GM12878 (cell line): ENCODE measurements at regions of chr1 and their contacts with region 1.

Region 1: GRCh38 chr1:104648269-104648691 is 898.6 kb downstream of the AMY1C start:
- DNase-seq: no peak
- ATAC-seq: peak; percentile 73
- H3K4me3 ChIP-seq: no peak overlapping the region
- H3K27ac ChIP-seq: no peak overlapping the region
- H3K4me1 ChIP-seq: no peaks in the 10 kb centered on the region
- H3K27me3 ChIP-seq: no peaks in the 10 kb centered on the region
- CTCF ChIP-seq: peak; percentile 37 to 58 (median 53); a peak in 5 of 6 replicates
- EP300 ChIP-seq: no peak
- POLR2A ChIP-seq: no peak
- RAD21 ChIP-seq: peak; percentile 88

Region 2: GRCh38 chr1:104765085-104765484 is 116.8 kb after region 1 on chr1:
- CTCF ChIA-PET with region 1: interaction called, 3 read pairs
- POLR2A ChIA-PET with region 1: no interaction called
- RAD21 ChIA-PET with region 1: interaction called, 6 read pairs
- SMC1A ChIA-PET with region 1: interaction called, 5 read pairs
- in situ Hi-C with region 1: no loop called
- intact Hi-C with region 1: loop called (anchors 5 kb)
- DNase-seq: peak; percentile 59
- ATAC-seq: peak; percentile 92
- H3K4me3 ChIP-seq: no peak overlapping the region
- H3K27ac ChIP-seq: no peak overlapping the region
- H3K4me1 ChIP-seq: peaks cover 4% of the 10 kb centered on the region
- H3K27me3 ChIP-seq: no peaks in the 10 kb centered on the region
- CTCF ChIP-seq: no peak
- EP300 ChIP-seq: no peak; a peak in 1 of 4 replicates
- POLR2A ChIP-seq: no peak
- RAD21 ChIP-seq: no peak

Region 3: DNA sequence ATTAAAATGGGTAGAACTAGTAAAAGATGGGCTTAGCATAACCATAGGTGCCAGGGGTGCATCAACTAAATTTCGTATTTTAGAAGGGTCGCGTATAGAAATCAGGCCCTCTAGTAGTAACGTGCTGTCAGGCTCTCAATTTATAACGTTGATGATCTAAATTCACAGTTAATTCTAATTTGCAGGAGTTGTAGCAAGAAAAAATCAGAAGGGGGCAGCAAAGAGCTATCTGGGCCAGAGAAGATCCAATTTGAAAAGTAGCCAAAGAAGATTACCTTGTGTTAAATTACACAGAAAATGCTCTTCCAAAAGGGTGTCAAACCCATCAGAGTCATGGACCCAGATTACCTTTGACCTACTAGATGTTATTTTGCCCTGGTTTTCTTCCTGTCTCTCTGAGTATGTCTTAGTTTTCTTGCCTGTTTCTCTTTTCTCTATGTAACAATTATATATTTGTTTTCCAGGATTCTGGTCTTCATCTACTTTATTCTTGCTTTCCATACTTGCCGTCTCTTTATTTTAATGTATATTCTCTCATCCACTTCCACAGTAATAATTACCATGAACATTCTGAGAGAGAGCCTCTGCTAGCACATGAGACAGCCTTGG is 132.3 kb after region 1 on chr1:
- CTCF ChIA-PET with region 1: interaction called, 28 read pairs
- POLR2A ChIA-PET with region 1: no interaction called
- RAD21 ChIA-PET with region 1: interaction called, 15 read pairs
- SMC1A ChIA-PET with region 1: interaction called, 9 read pairs
- in situ Hi-C with region 1: no loop called
- intact Hi-C with region 1: loop called (anchors 2 kb)
- DNase-seq: no peak
- ATAC-seq: peak; percentile 63
- H3K4me3 ChIP-seq: no peak overlapping the region
- H3K27ac ChIP-seq: no peak overlapping the region
- H3K4me1 ChIP-seq: no peaks in the 10 kb centered on the region
- H3K27me3 ChIP-seq: no peaks in the 10 kb centered on the region
- CTCF ChIP-seq: peak; percentile 70 to 79 (median 79)
- EP300 ChIP-seq: no peak
- POLR2A ChIP-seq: no peak
- RAD21 ChIP-seq: peak; percentile 96

Region 4: DNA sequence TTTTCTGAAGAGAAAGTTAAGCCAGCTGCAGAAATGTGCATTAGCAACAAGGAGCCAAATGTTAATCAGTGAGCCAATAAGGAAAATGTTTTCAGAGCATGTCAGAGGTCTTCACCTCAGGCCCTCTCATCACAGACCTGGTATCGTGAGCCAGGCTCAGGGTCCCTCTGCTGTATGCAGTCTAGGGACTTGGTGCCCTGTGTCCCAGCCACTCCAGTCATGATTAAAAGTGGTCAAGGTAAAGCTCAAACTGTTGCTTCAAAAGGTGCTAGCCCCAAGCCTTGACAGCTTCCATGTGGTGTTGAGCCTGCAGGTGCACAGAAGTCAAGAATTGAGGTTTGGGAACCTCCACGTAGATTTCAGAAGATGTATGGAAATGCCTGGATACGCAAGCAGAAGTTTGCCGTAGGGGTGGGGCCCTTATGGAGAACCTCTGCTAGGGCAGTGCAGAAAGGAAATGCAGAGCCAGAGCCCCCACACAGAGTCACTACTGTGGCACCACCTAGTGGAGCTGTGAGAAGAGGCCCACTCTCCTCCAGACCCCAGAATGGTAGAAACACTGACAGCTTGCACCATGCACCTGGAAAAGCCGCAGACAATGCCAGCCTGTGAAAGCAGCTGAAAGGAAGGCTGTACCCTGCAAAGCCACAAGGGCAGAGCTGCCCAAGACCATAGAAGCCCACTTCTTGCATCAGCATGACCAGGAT is 230.1 kb after region 1 on chr1:
- CTCF ChIA-PET with region 1: interaction called, 5 read pairs
- POLR2A ChIA-PET with region 1: no interaction called
- RAD21 ChIA-PET with region 1: no interaction called
- SMC1A ChIA-PET with region 1: interaction called, 8 read pairs
- in situ Hi-C with region 1: no loop called
- intact Hi-C with region 1: loop called (anchors 1 kb)
- DNase-seq: no peak
- ATAC-seq: peak; percentile 82
- H3K4me3 ChIP-seq: no peak overlapping the region
- H3K27ac ChIP-seq: no peak overlapping the region
- H3K4me1 ChIP-seq: no peaks in the 10 kb centered on the region
- H3K27me3 ChIP-seq: no peaks in the 10 kb centered on the region
- CTCF ChIP-seq: peak; percentile 30 to 46 (median 34); a peak in 3 of 6 replicates
- EP300 ChIP-seq: no peak
- POLR2A ChIP-seq: no peak
- RAD21 ChIP-seq: peak; percentile 53

Region 5: DNA sequence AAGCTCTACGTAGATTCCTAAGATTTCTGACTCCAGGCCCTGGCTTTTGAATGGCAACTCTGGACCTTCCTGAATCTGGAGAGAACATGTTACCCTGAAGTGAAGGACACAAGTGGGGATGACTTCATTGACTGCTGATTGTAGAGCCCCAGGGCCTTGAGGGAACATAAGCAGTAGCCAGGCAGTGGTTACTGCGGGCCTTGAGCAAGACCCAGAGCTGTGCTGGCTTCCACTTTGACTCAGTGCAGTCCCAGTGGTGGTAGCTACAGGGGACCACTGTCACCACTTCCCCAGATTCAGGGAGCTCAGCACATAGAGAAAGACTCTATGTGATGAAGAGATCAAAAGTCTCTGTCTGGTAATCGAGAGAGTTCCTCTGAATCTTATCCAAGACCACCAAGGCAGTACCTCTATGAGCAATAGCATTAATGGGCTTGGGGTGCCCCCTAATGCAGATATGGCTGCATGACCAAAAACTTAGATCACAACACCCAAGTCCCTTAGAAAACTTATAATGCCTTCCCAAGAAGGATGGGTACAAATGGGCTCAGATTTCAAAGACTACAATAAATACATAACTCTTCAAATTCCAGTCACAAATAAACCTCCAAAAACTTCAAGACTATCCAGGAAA is 379.7 kb after region 1 on chr1:
- CTCF ChIA-PET with region 1: interaction called, 44 read pairs
- POLR2A ChIA-PET with region 1: no interaction called
- RAD21 ChIA-PET with region 1: interaction called, 37 read pairs
- SMC1A ChIA-PET with region 1: interaction called, 38 read pairs
- in situ Hi-C with region 1: no loop called
- intact Hi-C with region 1: loop called (anchors 1 kb)
- DNase-seq: no peak
- ATAC-seq: peak; percentile 79
- H3K4me3 ChIP-seq: no peak overlapping the region
- H3K27ac ChIP-seq: no peak overlapping the region
- H3K4me1 ChIP-seq: no peaks in the 10 kb centered on the region
- H3K27me3 ChIP-seq: no peaks in the 10 kb centered on the region
- CTCF ChIP-seq: peak; percentile 34 to 48 (median 42); a peak in 4 of 6 replicates
- EP300 ChIP-seq: no peak
- POLR2A ChIP-seq: no peak
- RAD21 ChIP-seq: peak; percentile 80

Region 6: DNA sequence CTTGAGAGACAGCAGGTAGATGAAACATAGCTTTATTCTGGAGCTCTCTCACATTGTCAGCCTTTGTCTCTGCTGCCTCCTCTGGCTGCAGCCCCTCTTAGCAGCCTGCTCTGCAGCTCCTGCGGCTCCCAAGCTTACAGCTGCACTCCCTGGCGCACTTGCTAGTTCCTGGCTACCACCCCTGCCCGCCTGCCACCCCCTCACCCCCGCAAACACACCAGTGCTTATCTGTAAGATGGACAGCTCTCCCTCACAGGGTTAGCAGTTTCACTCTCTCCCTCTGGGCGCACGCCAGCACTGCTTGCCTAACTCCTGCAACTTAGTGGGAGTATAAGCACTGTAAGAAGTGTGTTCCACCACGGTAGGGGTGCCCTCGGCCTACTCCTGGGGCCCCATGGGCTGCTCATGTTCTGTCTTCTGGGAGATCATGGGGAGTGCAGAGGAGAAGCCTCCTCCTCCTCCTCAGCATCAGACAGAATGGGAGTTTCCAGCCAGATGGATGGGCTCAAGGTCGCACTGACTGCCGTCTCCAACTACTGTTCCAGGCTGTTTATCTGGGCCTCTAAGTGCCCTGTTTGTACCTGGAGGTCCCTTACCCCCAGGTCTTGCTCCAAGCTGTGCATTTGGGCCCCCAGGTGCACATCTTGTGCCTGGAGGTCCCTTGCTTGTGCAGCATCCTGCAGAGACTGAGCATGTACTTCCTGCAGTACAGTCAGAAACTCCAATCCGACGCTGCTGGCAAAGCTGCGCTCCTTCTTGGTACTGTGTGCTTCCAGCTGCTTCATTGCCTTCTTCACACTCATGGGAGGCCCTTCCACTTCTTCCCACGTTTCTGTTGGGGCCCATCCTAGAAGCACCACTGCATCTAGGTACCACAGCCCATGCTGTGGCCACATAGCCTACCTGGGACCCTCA is 489.5 kb after region 1 on chr1:
- CTCF ChIA-PET with region 1: interaction called, 5 read pairs
- POLR2A ChIA-PET with region 1: no interaction called
- RAD21 ChIA-PET with region 1: interaction called, 5 read pairs
- SMC1A ChIA-PET with region 1: interaction called, 3 read pairs
- in situ Hi-C with region 1: no loop called
- intact Hi-C with region 1: loop called (anchors 5 kb)
- DNase-seq: no peak
- ATAC-seq: peak; percentile 93
- H3K4me3 ChIP-seq: no peak overlapping the region
- H3K27ac ChIP-seq: no peak overlapping the region
- H3K4me1 ChIP-seq: no peaks in the 10 kb centered on the region
- H3K27me3 ChIP-seq: no peaks in the 10 kb centered on the region
- CTCF ChIP-seq: peak; percentile 22 to 54 (median 52); a peak in 5 of 6 replicates
- EP300 ChIP-seq: no peak
- POLR2A ChIP-seq: no peak
- RAD21 ChIP-seq: peak; percentile 41

Region 7: GRCh38 chr1:105793536-105794146 is 1145.4 kb after region 1 on chr1:
- CTCF ChIA-PET with region 1: interaction called, 6 read pairs
- POLR2A ChIA-PET with region 1: no interaction called
- RAD21 ChIA-PET with region 1: interaction called, 4 read pairs
- SMC1A ChIA-PET with region 1: interaction called, 3 read pairs
- in situ Hi-C with region 1: no loop called
- intact Hi-C with region 1: loop called (anchors 1 kb)
- DNase-seq: no peak
- ATAC-seq: peak; percentile 74
- H3K4me3 ChIP-seq: no peak overlapping the region
- H3K27ac ChIP-seq: no peak overlapping the region
- H3K4me1 ChIP-seq: no peaks in the 10 kb centered on the region
- H3K27me3 ChIP-seq: no peaks in the 10 kb centered on the region
- CTCF ChIP-seq: peak; percentile 63 to 70 (median 64)
- EP300 ChIP-seq: no peak
- POLR2A ChIP-seq: no peak
- RAD21 ChIP-seq: peak; percentile 73